Posterior vena cava (tissue), 2 donors: ENCODE measurements at regions of chr7 and their contacts with region 1.

Region 1: DNA sequence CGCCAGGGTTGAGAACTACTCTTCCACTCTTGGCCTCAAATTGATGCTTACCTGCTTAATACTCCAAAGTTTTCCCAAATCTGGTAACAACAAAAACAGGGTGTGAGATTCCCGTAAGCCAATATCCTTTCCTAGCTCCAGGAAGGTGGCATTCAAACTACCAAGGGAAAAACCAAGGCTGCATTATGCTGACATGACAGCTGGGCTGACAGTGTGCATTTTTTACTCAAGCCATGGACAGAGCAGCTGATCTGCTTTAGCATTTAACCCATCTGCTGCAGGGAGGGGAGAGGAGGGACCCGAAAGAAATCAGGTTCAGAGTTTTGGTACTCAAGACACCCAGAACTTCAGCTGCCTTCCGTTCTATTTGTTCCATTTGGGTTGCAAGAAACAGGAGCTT is 49.8 kb upstream of the RAPGEF5 start:
- DNase-seq: no peak

Region 2: GRCh38 chr7:22302951-22303423 is 103.7 kb before region 1 on chr7:
- intact Hi-C with region 1: loop called in 1 of 2 experiments (anchors 5 kb)
- DNase-seq: no peak

Region 3: GRCh38 chr7:22433710-22434460 is 27.2 kb after region 1 on chr7:
- intact Hi-C with region 1: no loop called
- DNase-seq: no peak